ENCODE measurements at regions of chr19 and their contacts with region 1.

Region 1: DNA sequence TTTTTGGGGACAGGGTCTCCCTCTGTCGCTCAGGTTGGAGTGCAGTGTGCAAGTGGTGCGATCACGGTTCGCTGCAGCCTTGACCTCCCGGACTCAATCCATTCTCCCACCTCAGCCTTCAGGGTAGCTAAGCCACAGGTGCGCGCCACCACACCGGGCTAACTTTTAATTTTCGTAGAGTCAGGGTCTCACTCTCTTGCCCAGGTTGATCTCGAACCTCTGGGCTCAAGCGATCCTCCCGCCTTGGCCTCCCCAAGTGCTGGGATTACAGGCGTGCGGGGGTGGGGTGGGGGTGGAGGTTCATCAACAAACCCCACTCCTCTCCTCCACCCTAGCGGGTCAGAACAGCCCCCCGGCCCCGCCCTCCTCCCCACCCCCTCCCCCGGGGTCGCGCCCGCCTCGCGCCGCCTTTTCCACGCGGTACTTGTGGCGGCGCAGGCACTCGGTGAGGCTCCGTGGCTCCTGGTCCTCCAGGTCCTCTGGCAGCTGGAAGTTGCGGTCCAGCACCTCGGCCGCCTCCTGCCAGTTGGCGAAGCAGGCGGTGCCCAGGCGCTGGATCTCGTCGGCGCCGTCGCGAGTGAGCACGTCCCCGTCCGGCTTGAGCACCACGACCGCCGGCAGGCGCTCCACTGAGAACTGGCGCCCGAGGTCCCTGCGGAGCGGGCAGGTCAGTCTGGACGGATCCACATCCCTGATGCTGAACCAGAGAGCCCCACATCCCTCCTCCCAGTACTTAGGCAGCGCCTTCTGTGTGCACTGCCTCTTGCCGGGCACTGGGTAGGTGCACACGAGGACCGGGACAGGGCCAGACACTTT is 5.2 kb downstream of the NXNL1 start:
- DNase-seq: no peak
- ATAC-seq: peak; percentile 54
- H3K4me3 ChIP-seq: no peak overlapping the region
- H3K27ac ChIP-seq: no peak overlapping the region
- H3K4me1 ChIP-seq: peaks cover 9% of the 10 kb centered on the region
- H3K27me3 ChIP-seq: peaks cover 15% of the 10 kb centered on the region; the same call in 1 of the 2 replicates
- CTCF ChIP-seq: no peak

Region 2: GRCh38 chr19:17605761-17606745 is 150.5 kb after region 1 on chr19:
- CTCF ChIA-PET with region 1: no interaction called
- POLR2A ChIA-PET with region 1: no interaction called
- intact Hi-C with region 1: no loop called
- DNase-seq: peak; percentile 58
- ATAC-seq: peak; percentile 78
- H3K4me3 ChIP-seq: peak overlapping the region; percentile 43; the same call in 1 of the 2 replicates
- H3K27ac ChIP-seq: no peak overlapping the region
- H3K4me1 ChIP-seq: 0 out of 2 replicates have a peak, but pooled peaks cover 6% of the 10 kb centered on the region
- H3K27me3 ChIP-seq: peaks cover 18% of the 10 kb centered on the region
- CTCF ChIP-seq: peak; percentile 58

Region 3: DNA sequence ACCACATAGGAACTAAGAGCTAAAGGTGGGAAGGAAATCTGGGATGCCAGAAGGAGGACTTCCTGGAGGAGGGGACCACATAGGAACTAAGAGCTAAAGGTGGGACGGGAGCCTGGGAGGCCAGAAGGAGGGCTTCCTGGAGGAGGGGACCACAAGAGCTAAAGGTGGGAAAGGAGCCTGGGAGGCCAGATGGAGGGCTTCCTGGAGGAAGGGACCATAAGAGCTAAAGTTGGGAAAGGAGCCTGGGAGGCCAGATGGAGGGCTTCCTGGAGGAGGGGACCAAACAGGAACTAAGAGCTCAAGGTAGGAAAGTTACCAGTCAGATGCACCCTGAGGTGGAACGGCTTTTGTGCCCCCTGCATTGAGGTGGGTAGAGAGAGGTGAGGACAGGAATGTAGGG is 285.9 kb after region 1 on chr19:
- CTCF ChIA-PET with region 1: no interaction called
- POLR2A ChIA-PET with region 1: interaction called, 10 read pairs
- intact Hi-C with region 1: no loop called
- DNase-seq: no peak
- ATAC-seq: no peak
- H3K4me3 ChIP-seq: no peak overlapping the region
- H3K27ac ChIP-seq: no peak overlapping the region
- H3K4me1 ChIP-seq: no peaks in the 10 kb centered on the region
- H3K27me3 ChIP-seq: no peaks in the 10 kb centered on the region
- CTCF ChIP-seq: no peak